ENCODE measurements at regions of chr11 and their contacts with region 1.

Region 1: DNA sequence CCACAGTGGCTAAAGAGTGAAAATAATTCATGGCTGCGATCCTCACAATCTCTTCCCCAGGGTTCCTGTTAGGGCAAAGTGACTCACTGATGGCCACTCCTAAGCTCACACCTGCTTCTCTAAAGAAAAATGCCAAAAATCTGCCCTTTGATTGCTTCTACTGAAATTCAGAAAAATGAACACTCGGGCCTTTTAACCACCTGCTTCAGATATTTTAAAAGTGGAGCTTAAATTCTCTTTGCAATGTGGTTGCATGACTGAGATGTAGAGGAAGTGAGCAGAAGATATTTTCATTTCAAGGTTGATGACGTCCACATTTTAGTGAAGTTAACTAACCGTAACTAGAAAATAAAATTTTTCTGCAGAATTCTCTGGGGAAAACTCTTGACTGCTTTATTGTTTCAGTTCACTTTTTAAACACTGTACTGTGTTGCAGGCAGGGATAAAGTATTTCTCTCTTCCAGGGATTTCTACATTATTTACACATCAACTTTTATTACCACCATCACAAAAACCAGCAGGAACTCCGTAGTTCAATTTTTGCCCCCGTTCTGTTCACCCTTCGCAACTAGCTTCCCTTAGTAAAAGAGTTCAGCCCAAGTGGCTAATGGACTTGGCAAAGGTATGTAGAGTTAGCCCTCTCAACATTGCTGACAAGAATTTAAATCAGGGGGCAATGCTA is 8.5 kb downstream of the RAB30 start:
- DNase-seq: peak in 1 of 3 donors; percentile 8
- H3K4me3 ChIP-seq: peak overlapping the region in 1 of 3 experiments; percentile 22
- H3K4me3 Mint-ChIP-seq: peak overlapping the region; percentile 49 to 55
- H3K27ac ChIP-seq: no peak overlapping the region
- H3K27ac Mint-ChIP-seq: peak overlapping the region in 2 of 7 donors; percentile 20 to 77
- H3K4me1 ChIP-seq: peaks cover 3 to 8% of the 10 kb centered on the region in 2 donors
- H3K4me1 Mint-ChIP-seq: peaks cover 10% of the 10 kb centered on the region
- H3K27me3 ChIP-seq: peaks cover 0 to 4% of the 10 kb centered on the region in 2 donors
- H3K27me3 Mint-ChIP-seq: peaks cover 9 to 12% (median 11%) of the 10 kb centered on the region in 3 donors
- CTCF ChIP-seq: no peak

Region 2: DNA sequence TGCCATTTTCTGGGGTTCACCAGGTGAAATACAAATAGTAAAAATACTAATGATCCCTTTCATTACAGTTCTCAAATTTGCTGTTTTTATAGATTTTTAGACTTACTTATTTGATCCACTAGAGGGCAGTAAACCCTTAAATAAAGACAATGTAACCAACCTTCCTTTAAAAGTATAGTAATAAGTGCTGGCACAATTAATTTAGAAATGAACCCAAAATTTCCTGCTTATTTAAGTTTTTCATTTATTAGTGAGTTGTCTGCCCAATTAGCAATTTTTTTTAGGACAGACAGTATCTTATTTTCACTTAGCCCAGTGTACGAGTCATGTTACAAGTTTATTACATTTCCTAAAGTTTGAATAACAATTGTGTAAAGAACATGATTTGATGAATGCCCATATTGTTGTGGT is 157.0 kb before region 1 on chr11:
- intact Hi-C with region 1: loop called in 1 of 2 experiments (anchors 10 kb)
- DNase-seq: peak in 2 of 3 donors; percentile 15 to 34
- H3K4me3 ChIP-seq: no peak overlapping the region
- H3K4me3 Mint-ChIP-seq: no peak overlapping the region
- H3K27ac ChIP-seq: peak overlapping the region in 1 of 2 donors; percentile 61
- H3K27ac Mint-ChIP-seq: peak overlapping the region in 5 of 7 donors; percentile 66 to 93 (median 88)
- H3K4me1 ChIP-seq: peaks cover 23 to 37% of the 10 kb centered on the region in 2 donors
- H3K4me1 Mint-ChIP-seq: peaks cover 37% of the 10 kb centered on the region
- H3K27me3 ChIP-seq: no peaks in the 10 kb centered on the region
- H3K27me3 Mint-ChIP-seq: peaks cover 0 to 1% (median 0%) of the 10 kb centered on the region in 3 donors
- CTCF ChIP-seq: peak; percentile 82

Region 3: DNA sequence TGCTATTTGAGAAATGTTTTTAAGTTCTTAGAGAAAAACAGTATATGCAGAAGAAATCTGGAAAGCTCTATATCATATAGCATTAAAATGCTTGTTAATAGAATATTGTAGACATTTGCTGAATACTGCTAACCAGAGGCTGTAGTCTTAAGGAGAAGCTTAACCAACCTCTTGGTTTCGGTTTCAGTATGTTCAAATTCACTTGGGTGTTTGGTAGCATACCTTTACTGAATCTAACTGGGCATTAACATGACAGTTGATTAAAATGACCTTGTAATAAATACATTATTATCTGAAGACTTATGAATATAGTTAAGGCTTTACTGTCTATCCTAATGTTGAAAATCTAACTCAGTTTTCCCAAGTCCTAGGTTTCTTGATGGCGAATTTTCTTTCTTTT is 99.2 kb after region 1 on chr11:
- intact Hi-C with region 1: no loop called
- DNase-seq: peak in 1 of 3 donors; percentile 33
- H3K4me3 ChIP-seq: no peak overlapping the region
- H3K4me3 Mint-ChIP-seq: peak overlapping the region in 1 of 2 donors; percentile 12
- H3K27ac ChIP-seq: peak overlapping the region in 1 of 2 donors; percentile 34
- H3K27ac Mint-ChIP-seq: peak overlapping the region; percentile 25 to 80 (median 72)
- H3K4me1 ChIP-seq: peaks cover 25 to 42% of the 10 kb centered on the region in 2 donors
- H3K4me1 Mint-ChIP-seq: peaks cover 28% of the 10 kb centered on the region
- H3K27me3 ChIP-seq: no peaks in the 10 kb centered on the region
- H3K27me3 Mint-ChIP-seq: no peaks in the 10 kb centered on the region
- CTCF ChIP-seq: no peak

Region 4: GRCh38 chr11:83174008-83174407 is 110.8 kb after region 1 on chr11:
- intact Hi-C with region 1: no loop called
- DNase-seq: peak; percentile 25 to 60 (median 42)
- H3K4me3 ChIP-seq: peak overlapping the region in 1 of 3 experiments; percentile 16
- H3K4me3 Mint-ChIP-seq: peak overlapping the region in 1 of 2 donors; percentile 42
- H3K27ac ChIP-seq: peak overlapping the region; percentile 54 to 61
- H3K27ac Mint-ChIP-seq: peak overlapping the region; percentile 43 to 87 (median 77)
- H3K4me1 ChIP-seq: peaks cover 48 to 55% of the 10 kb centered on the region in 2 donors
- H3K4me1 Mint-ChIP-seq: peaks cover 42% of the 10 kb centered on the region
- H3K27me3 ChIP-seq: no peaks in the 10 kb centered on the region
- H3K27me3 Mint-ChIP-seq: no peaks in the 10 kb centered on the region
- CTCF ChIP-seq: no peak

Region 5: GRCh38 chr11:84573868-84574267 is 1510.7 kb after region 1 on chr11:
- intact Hi-C with region 1: no loop called
- DNase-seq: no peak
- H3K4me3 ChIP-seq: no peak overlapping the region
- H3K4me3 Mint-ChIP-seq: no peak overlapping the region
- H3K27ac ChIP-seq: no peak overlapping the region
- H3K27ac Mint-ChIP-seq: no peak overlapping the region
- H3K4me1 ChIP-seq: no peaks in the 10 kb centered on the region
- H3K4me1 Mint-ChIP-seq: no peaks in the 10 kb centered on the region
- H3K27me3 ChIP-seq: no peaks in the 10 kb centered on the region
- H3K27me3 Mint-ChIP-seq: peaks cover 0 to 2% (median 0%) of the 10 kb centered on the region in 3 donors
- CTCF ChIP-seq: no peak